ENCODE measurements at regions of chr2 and their contacts with region 1.

Region 1: GRCh38 chr2:74334931-74335333 is 8.3 kb downstream of the SLC4A5 start:
- DNase-seq: peak; percentile 81 to 88
- H3K4me3 ChIP-seq: no peak overlapping the region
- H3K27ac ChIP-seq: no peak overlapping the region
- H3K4me1 ChIP-seq: peaks cover 0 to 8% of the 10 kb centered on the region in 2 donors
- H3K27me3 ChIP-seq: no peaks in the 10 kb centered on the region
- CTCF ChIP-seq: peak; percentile 82 to 96 (median 92)
- POLR2A ChIP-seq: no peak

Region 2: GRCh38 chr2:74250189-74250631 is 84.7 kb before region 1 on chr2:
- intact Hi-C with region 1: loop called (anchors 2 kb)
- DNase-seq: peak; percentile 60 to 63
- H3K4me3 ChIP-seq: no peak overlapping the region
- H3K27ac ChIP-seq: no peak overlapping the region
- H3K4me1 ChIP-seq: no peaks in the 10 kb centered on the region
- H3K27me3 ChIP-seq: no peaks in the 10 kb centered on the region
- CTCF ChIP-seq: peak; percentile 42 to 88 (median 71)
- POLR2A ChIP-seq: no peak

Region 3: DNA sequence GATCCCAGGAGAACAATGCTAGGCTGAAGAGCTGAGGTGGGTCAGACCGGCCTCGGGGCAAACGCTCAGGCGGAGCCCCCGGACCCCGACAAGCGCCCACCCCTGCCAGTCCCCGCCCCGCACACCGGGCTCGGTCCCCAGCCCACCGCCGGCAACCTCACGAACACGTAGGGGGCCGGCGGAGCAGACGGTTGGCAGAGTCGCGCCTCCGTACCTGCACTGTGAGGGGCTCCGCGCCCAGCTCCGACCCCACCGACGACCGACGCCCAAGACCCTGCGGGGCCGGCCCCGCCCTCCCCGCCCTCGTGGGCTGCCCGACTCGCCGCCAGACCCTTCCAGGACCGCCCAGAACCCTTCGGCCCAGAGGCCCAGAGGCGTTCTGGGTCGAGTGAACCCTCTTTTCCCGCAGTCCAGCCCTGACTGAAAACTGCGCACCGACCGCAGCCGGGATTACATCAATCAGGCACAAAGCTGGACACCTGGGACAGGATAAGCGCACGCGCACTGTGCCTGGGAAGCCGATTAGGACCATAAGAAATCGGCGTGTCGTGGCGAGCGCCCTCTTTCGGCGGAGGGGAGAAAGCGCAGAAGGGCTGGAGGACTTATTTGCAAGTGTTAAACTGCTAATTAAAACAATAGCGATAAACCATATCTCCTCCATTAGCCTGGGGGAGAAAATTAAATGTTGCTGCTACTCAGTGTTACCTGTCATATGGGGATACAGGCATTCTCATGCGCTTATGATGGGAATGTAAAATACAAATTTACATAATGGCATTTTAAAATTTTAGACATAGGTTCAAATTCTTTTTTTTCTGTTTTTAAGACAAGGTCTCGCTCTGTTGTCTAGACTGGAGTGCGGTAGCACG is 56.9 kb after region 1 on chr2:
- intact Hi-C with region 1: no loop called
- DNase-seq: peak; percentile 90 to 95
- H3K4me3 ChIP-seq: peak overlapping the region; percentile 82 to 87 (median 86)
- H3K27ac ChIP-seq: peak overlapping the region; percentile 96 to 99 (median 96)
- H3K4me1 ChIP-seq: peaks cover 17 to 26% of the 10 kb centered on the region in 2 donors
- H3K27me3 ChIP-seq: no peaks in the 10 kb centered on the region
- CTCF ChIP-seq: peak; percentile 90 to 97 (median 96)
- POLR2A ChIP-seq: peak in 1 of 2 donors; percentile 57

Region 4: GRCh38 chr2:74935975-74936391 is 601.1 kb after region 1 on chr2:
- intact Hi-C with region 1: no loop called
- DNase-seq: no peak
- H3K4me3 ChIP-seq: no peak overlapping the region
- H3K27ac ChIP-seq: no peak overlapping the region
- H3K4me1 ChIP-seq: no peaks in the 10 kb centered on the region
- H3K27me3 ChIP-seq: no peaks in the 10 kb centered on the region
- CTCF ChIP-seq: no peak
- POLR2A ChIP-seq: no peak

Measured in thyroid gland (tissue), 4 donors.